ENCODE measurements at regions of chr14 and their contacts with region 1.

Region 1: DNA sequence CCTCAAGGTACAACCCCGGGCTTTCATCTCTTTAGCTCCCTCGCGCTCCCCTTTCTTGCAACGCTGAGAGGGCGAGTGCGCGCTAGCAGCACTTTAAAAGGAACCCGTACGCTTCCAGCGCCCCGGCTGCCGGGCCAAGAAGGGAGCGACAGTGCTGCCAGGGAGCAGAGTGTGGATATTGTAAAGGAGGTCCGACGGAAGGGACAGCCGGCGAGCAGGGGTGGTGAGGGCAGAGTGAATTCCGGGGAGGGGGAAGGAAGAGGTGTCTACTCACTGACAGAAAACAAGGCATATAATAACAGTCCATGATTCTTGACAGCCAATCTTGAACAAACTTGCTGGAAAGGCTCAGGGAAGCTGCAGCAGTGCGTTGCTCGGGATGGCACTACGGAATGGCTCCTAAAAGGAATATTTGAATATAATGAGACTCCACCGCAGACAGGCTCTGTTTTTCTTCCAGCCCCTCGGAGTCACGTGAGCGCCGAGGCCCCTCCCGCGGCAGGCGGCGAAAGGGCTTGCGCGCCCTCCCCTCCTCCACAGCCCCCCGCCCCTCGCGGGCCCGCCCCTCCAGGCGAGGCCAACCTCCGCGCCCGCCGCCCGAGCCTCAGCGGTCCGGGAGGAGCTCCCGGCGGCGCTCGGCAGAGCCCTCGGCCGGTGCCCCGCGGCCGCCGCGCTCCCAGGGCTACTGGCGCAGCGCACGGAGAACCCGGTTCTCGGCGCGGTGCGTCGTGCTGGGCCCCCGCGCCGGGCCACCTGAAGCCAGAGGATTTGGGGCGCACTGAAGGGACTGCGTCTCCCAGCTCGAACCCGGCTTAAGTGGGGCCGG is 3.4 kb downstream of the BMP4 start:
- DNase-seq: peak; percentile 69
- ATAC-seq: peak; percentile 71
- H3K4me3 ChIP-seq: peak overlapping the region; percentile 87 to 92 (median 90)
- H3K27ac ChIP-seq: peak overlapping the region; percentile 85
- H3K4me1 ChIP-seq: peaks cover 60% of the 10 kb centered on the region
- H3K27me3 ChIP-seq: no peaks in the 10 kb centered on the region; a peak in 1 of 5 replicates
- CTCF ChIP-seq: no peak
- EP300 ChIP-seq: no peak
- POLR2A ChIP-seq: peak; percentile 82 to 88
- RAD21 ChIP-seq: peak; percentile 57

Region 2: DNA sequence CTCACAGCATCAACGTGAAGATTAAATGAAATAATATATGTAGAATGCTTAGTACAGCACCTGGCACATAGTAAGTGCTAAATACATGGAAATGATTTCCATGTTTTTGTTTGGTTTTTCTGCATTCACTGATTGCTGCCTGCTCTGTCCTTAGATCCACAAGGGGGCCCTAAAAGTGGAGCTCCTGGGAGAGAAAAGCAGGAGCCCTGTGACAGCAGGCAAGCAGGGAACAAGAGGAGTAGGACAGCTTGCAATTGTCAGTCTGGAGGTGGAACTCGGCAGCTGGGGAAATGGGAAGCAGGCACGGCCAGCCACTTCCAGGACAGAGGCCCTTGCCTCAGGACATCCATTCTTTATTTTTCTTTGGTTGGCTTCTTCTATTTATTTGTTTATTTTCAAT is 289.5 kb before region 1 on chr14:
- CTCF ChIA-PET with region 1: no interaction called
- POLR2A ChIA-PET with region 1: interaction called, 7 read pairs
- in situ Hi-C with region 1: loop called (anchors 10 kb)
- intact Hi-C with region 1: loop called (anchors 1 kb)
- DNase-seq: peak; percentile 76
- ATAC-seq: peak; percentile 99
- H3K4me3 ChIP-seq: no peak overlapping the region
- H3K27ac ChIP-seq: no peak overlapping the region
- H3K4me1 ChIP-seq: peaks cover 17% of the 10 kb centered on the region
- H3K27me3 ChIP-seq: no peaks in the 10 kb centered on the region
- CTCF ChIP-seq: peak; percentile 69
- EP300 ChIP-seq: no peak
- POLR2A ChIP-seq: no peak
- RAD21 ChIP-seq: peak; percentile 80

Region 3: DNA sequence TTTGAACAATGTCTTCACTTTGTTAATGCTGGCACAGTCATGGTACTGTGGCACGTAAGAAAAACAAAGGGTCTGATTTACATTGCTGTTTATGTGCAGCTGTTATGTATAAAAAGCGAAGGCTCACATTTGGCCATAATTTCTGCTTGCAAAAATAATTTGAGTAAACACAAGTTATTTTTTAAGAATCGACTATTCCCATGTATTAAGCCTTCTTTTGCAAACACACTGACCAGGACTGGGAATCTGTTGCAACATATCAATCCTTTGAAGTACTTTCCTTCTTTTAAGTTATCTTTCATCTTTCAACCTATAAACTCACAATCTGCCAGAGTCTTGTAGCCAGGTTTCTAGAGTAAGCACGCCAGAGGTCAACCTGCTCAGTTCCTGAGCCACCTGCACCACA is 148.8 kb after region 1 on chr14:
- CTCF ChIA-PET with region 1: no interaction called
- POLR2A ChIA-PET with region 1: interaction called, 41 read pairs
- in situ Hi-C with region 1: no loop called
- intact Hi-C with region 1: no loop called
- DNase-seq: peak; percentile 91
- ATAC-seq: peak; percentile 74
- H3K4me3 ChIP-seq: no peak overlapping the region
- H3K27ac ChIP-seq: peak overlapping the region; percentile 81
- H3K4me1 ChIP-seq: peaks cover 71% of the 10 kb centered on the region
- H3K27me3 ChIP-seq: no peaks in the 10 kb centered on the region
- CTCF ChIP-seq: no peak
- EP300 ChIP-seq: peak in 1 of 2 experiments; percentile 99; a peak in 2 of 4 replicates
- POLR2A ChIP-seq: no peak
- RAD21 ChIP-seq: no peak

Region 4: DNA sequence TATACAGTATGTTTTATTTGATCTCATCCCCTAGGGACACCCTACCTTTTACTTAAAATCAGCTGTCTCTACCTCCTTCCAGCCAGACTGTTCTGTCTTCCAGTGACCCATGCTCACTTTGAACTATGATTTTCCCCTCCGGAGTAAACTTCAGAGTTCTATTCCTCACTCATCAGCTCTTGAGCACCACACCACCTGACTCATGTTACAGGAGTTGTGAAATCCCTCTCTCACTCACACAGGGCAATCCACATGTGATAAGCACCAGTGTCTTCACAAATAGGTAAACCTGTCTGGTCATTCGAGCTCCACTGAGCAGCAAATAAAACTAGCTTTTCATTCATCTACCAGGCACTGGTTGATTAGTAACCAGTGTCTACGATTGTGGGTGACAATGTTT is 180.7 kb after region 1 on chr14:
- CTCF ChIA-PET with region 1: no interaction called
- POLR2A ChIA-PET with region 1: interaction called, 84 read pairs
- in situ Hi-C with region 1: loop called (anchors 5 kb)
- intact Hi-C with region 1: loop called (anchors 5 kb)
- DNase-seq: peak; percentile 96
- ATAC-seq: peak; percentile 77
- H3K4me3 ChIP-seq: peak overlapping the region; percentile 5 to 36 (median 23); a peak in 2 of 6 replicates
- H3K27ac ChIP-seq: peak overlapping the region; percentile 83
- H3K4me1 ChIP-seq: peaks cover 92% of the 10 kb centered on the region
- H3K27me3 ChIP-seq: no peaks in the 10 kb centered on the region
- CTCF ChIP-seq: no peak
- EP300 ChIP-seq: peak in 1 of 2 experiments; percentile 95; a peak in 2 of 4 replicates
- POLR2A ChIP-seq: peak in 1 of 2 experiments; percentile 55; a peak in 2 of 4 replicates
- RAD21 ChIP-seq: 0 out of 2 replicates have a peak, but pooled peaks have one; percentile 26

Region 5: GRCh38 chr14:54347997-54348611 is 394.9 kb after region 1 on chr14:
- CTCF ChIA-PET with region 1: no interaction called
- POLR2A ChIA-PET with region 1: interaction called, 11 read pairs
- in situ Hi-C with region 1: loop called (anchors 10 kb)
- intact Hi-C with region 1: loop called (anchors 5 kb)
- DNase-seq: peak; percentile 75
- ATAC-seq: peak; percentile 77
- H3K4me3 ChIP-seq: no peak overlapping the region
- H3K27ac ChIP-seq: no peak overlapping the region
- H3K4me1 ChIP-seq: peaks cover 54% of the 10 kb centered on the region
- H3K27me3 ChIP-seq: no peaks in the 10 kb centered on the region
- CTCF ChIP-seq: peak; percentile 87
- EP300 ChIP-seq: no peak
- POLR2A ChIP-seq: no peak
- RAD21 ChIP-seq: peak; percentile 87